ENCODE measurements at regions of chrX and their contacts with region 1.

Region 1: GRCh38 chrX:129637217-129638109 is 17.3 kb downstream of the APLN start:
- DNase-seq: peak; percentile 68 to 83
- ATAC-seq: peak; percentile 87 to 93 (median 90)
- H3K4me3 ChIP-seq: no peak overlapping the region
- H3K4me3 Mint-ChIP-seq: no peak overlapping the region
- H3K27ac ChIP-seq: no peak overlapping the region
- H3K27ac Mint-ChIP-seq: no peak overlapping the region
- H3K4me1 ChIP-seq: peaks cover 9% of the 10 kb centered on the region
- H3K4me1 Mint-ChIP-seq: peaks cover 0 to 6% of the 10 kb centered on the region in 2 donors
- H3K27me3 ChIP-seq: no peaks in the 10 kb centered on the region
- H3K27me3 Mint-ChIP-seq: no peaks in the 10 kb centered on the region
- CTCF ChIP-seq: peak; percentile 73

Region 2: GRCh38 chrX:129726307-129727111 is 89.0 kb after region 1 on chrX:
- intact Hi-C with region 1: loop called (anchors 1 kb)
- DNase-seq: peak in 1 of 2 donors; percentile 56
- ATAC-seq: peak in 2 of 3 donors; percentile 44 to 58
- H3K4me3 ChIP-seq: no peak overlapping the region
- H3K4me3 Mint-ChIP-seq: no peak overlapping the region
- H3K27ac ChIP-seq: no peak overlapping the region
- H3K27ac Mint-ChIP-seq: no peak overlapping the region
- H3K4me1 ChIP-seq: peaks cover 10% of the 10 kb centered on the region
- H3K4me1 Mint-ChIP-seq: peaks cover 22 to 35% of the 10 kb centered on the region in 2 donors
- H3K27me3 ChIP-seq: no peaks in the 10 kb centered on the region
- H3K27me3 Mint-ChIP-seq: peaks cover 0 to 25% of the 10 kb centered on the region in 2 donors
- CTCF ChIP-seq: peak; percentile 50

Region 3: GRCh38 chrX:129754056-129755024 is 116.9 kb after region 1 on chrX:
- intact Hi-C with region 1: loop called (anchors 1 kb)
- DNase-seq: peak in 1 of 2 donors; percentile 23
- ATAC-seq: peak in 1 of 3 donors; percentile 22
- H3K4me3 ChIP-seq: no peak overlapping the region
- H3K4me3 Mint-ChIP-seq: peak overlapping the region; percentile 49
- H3K27ac ChIP-seq: peak overlapping the region; percentile 35
- H3K27ac Mint-ChIP-seq: peak overlapping the region; percentile 82 to 88
- H3K4me1 ChIP-seq: peaks cover 66% of the 10 kb centered on the region
- H3K4me1 Mint-ChIP-seq: peaks cover 66% of the 10 kb centered on the region in 2 donors
- H3K27me3 ChIP-seq: no peaks in the 10 kb centered on the region
- H3K27me3 Mint-ChIP-seq: no peaks in the 10 kb centered on the region
- CTCF ChIP-seq: peak; percentile 25